ENCODE measurements at regions of chr3 and their contacts with region 1.

Region 1: GRCh38 chr3:33113772-33114621 is at the start of gene CRTAP:
- DNase-seq: peak; percentile 86
- H3K4me3 Mint-ChIP-seq: peak within 1 kb of the TSS; percentile 78
- H3K27ac Mint-ChIP-seq: no peak within 1 kb of the TSS
- H3K4me1 Mint-ChIP-seq: peaks cover 36% of the 10 kb centered on the region
- H3K27me3 Mint-ChIP-seq: no peaks in the 10 kb centered on the region
- total RNA-seq, gene CRTAP: 48.1 to 51.1 TPM

Region 2: GRCh38 chr3:32570421-32571191 is 543.4 kb before region 1 on chr3 and contains the start of gene DYNC1LI1:
- CTCF ChIA-PET with region 1: no interaction called
- intact Hi-C with region 1: loop called (anchors 1 kb)
- DNase-seq: peak; percentile 94
- H3K4me3 Mint-ChIP-seq: peak within 1 kb of the TSS; percentile 88
- H3K27ac Mint-ChIP-seq: peak within 1 kb of the TSS; percentile 88
- H3K4me1 Mint-ChIP-seq: peaks cover 19% of the 10 kb centered on the region
- H3K27me3 Mint-ChIP-seq: no peaks in the 10 kb centered on the region
- total RNA-seq, gene DYNC1LI1: 29.8 to 33.1 TPM

Region 3: DNA sequence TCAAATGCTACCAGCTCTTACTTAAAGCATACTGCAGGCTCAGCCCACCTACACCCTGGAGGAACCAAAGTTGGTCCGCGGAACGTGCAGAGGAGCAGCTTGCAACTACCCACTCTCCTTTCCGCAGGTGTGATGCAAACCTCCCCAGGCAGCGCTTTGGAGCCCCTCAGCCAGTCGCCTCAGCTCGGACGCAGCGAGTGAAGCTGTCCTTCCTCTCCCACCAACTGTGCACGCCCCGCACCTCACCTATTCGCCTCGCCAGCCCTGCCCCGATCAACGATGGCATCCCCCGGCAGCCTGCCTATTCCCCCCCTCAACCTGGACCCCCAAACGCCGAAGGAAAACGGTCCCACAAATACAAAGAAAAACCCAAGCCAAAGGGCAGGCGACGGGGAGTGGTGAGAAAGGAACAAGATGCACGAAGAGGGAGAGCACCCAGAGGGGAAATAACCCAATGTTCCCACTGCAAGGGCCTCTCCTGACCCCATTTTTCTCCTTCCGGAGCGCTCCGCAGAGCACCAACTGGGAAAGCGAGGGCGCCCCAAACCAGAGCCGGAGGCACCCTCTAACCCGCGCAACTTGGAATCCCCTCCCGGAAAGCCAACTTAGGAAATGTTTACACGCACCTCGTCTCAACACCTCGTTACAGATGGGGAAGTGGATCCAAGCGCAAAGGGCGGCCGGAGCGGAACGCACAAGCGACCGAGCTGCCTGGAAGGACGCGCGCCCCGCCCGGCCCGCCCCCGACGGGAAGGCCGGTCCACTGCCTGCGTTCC is 17.7 kb before region 1 on chr3:
- CTCF ChIA-PET with region 1: no interaction called
- intact Hi-C with region 1: loop called (anchors 1 kb)
- DNase-seq: peak; percentile 68
- H3K4me3 Mint-ChIP-seq: peak overlapping the region; percentile 98
- H3K27ac Mint-ChIP-seq: peak overlapping the region; percentile 88
- H3K4me1 Mint-ChIP-seq: peaks cover 41% of the 10 kb centered on the region
- H3K27me3 Mint-ChIP-seq: no peaks in the 10 kb centered on the region

Region 4: GRCh38 chr3:33124638-33125037 is 10.6 kb after region 1 on chr3:
- CTCF ChIA-PET with region 1: no interaction called
- intact Hi-C with region 1: loop called (anchors 2 kb)
- DNase-seq: peak; percentile 31
- H3K4me3 Mint-ChIP-seq: no peak overlapping the region
- H3K27ac Mint-ChIP-seq: no peak overlapping the region
- H3K4me1 Mint-ChIP-seq: peaks cover 15% of the 10 kb centered on the region
- H3K27me3 Mint-ChIP-seq: no peaks in the 10 kb centered on the region

Region 5: DNA sequence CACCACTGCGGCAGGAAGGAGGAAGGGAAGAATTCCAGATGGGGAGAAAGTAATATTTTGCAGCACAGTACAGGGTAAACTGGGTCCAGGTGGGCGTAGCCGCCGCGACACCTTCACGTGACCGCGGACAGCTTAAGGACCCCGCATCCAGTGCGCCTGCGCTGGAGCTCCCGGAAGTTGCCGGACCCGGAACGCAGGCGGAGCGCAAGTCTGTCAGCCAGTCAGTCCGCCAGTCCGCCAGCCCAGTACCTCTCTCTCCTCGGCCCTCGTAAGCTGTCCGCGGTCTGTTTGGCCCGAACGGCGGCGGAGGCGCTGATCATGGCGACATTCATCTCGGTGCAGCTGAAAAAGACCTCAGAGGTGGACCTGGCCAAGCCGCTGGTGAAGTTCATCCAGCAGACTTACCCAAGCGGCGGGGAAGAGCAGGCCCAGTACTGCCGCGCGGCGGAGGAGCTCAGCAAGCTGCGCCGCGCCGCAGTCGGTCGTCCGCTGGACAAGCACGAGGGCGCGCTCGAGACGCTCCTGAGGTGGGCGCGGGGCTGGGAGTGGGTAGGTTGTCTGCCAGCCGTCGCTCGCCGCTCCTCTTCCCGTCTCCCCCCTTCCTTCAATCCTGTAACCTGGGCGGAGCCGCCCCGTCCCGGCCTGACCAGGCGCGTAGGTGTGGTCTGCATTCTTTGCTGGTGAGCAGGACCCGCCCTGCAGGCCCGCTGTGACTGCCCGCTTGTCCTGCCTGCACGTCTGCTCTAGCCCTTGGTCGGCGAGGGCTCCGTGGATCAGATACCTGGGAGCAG is 684.6 kb after region 1 on chr3 and contains the start of gene PDCD6IP:
- CTCF ChIA-PET with region 1: no interaction called
- intact Hi-C with region 1: loop called (anchors 5 kb)
- DNase-seq: peak; percentile 88
- H3K4me3 Mint-ChIP-seq: peak within 1 kb of the TSS; percentile 95
- H3K27ac Mint-ChIP-seq: peak within 1 kb of the TSS; percentile 83
- H3K4me1 Mint-ChIP-seq: peaks cover 56% of the 10 kb centered on the region
- H3K27me3 Mint-ChIP-seq: no peaks in the 10 kb centered on the region
- total RNA-seq, gene PDCD6IP: 126 to 127 TPM